ENCODE measurements at regions of chr2 and their contacts with region 1.

Region 1: DNA sequence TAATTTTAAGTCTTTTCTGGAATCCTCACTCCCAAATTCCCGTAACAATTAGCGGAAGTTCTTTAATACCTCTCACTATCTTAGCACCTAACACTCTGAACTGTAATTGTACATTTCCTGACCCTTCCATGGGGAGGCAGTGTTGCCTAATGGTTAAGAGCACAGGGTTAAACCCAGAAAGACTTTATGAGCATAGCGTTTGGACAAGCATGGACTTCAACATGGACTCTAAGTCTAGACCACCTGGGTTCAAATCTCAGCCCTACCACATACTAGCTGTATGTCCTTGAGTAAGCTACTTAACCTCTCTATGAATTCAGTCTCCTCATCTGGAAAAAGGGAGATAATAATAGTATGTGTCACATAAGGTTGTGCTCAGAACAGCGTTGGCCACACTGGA is 13.0 kb downstream of the ANTXR1 start:
- DNase-seq: no peak
- H3K4me3 ChIP-seq: no peak overlapping the region
- H3K27ac ChIP-seq: no peak overlapping the region
- H3K4me1 ChIP-seq: peaks cover 20% of the 10 kb centered on the region
- H3K27me3 ChIP-seq: no peaks in the 10 kb centered on the region
- CTCF ChIP-seq: peak; percentile 56 to 77 (median 61)

Region 2: DNA sequence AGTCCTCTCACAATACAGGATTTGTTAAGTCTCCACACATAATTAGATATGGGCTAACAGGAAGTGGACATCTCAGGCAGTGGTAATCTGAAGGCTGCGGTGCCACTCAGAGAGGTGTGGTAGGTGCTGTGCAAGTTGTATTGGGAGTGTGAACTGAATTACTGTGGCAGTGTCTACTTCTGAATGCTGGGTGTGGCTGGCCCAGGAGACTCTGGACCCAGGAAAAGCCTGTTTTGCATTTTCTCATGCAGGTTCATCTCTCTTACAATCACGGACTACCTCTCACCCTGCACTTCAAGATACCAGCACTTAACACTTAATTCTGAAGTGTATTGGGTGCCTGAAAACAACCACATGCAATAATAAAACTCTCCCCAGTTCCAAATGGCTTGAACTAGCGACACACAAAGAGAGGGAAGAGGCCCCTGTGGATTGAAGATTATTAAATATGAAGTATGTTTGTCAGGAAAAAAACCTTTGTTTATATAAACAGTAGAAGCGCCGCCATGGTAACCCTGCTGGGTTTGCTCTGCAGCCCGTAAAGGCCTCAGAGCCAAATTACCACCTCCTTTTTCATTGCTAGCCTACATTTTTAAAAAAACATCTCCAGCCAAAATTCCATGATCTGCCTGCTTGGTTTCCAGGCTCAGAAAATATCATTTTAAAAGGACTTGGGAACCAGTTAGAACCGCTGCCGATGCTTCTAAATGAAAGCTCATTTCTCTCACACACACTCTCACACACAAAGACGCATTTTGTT is 283.5 kb after region 1 on chr2:
- dilution Hi-C with region 1: loop called (anchors 10 kb)
- DNase-seq: no peak
- H3K4me3 ChIP-seq: no peak overlapping the region
- H3K27ac ChIP-seq: no peak overlapping the region
- H3K4me1 ChIP-seq: peaks cover 15% of the 10 kb centered on the region
- H3K27me3 ChIP-seq: peaks cover 19% of the 10 kb centered on the region
- CTCF ChIP-seq: no peak

Measured in keratinocyte (primary cell).